ENCODE measurements at regions of chr12 and their contacts with region 1.

Region 1: DNA sequence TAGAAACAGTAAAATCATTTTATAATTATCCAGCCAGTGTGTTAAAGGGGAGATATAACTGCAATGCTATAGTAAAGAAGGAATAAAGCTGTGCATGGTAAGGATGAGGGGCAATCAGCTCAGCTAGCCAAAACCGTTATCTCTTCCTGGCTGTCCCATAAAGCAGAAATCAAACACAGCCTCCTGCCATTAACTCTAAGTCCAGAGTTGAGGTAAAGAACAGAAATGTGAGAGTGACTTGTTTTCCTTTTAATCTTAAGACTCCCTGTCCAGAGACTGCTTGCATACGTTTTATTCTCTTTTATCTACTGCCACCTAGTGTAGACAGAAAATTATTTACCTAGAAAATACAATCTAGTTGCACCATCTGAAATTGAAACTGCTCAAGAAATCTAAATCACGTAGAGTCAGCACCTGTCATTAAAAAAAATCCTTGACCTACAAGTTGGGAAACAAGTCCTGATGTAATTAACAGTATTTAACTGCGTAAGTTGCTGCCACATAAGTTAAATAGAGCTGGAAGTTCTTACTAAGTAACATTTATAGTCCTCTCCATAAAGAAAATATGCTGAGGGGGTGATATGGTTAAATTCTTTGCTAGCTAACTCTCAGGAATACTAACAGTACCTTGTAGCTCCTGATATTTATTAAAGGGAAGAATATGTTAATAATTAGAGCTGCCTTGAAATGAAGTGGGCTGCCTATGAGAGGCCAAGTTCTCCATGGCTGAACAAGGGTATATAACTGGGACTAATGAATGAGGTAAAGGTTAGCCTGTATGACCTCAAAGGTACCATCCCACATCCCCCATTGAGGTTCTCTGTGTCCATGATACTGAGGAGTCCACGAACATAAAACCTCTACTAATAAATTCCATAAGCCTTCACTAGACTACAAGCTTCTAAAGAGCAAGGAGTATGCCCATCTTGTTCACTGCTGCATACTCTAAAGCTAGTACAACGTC is 62.7 kb downstream of the GALNT4 start:
- DNase-seq: peak in 1 of 2 experiments; percentile 66
- H3K4me3 ChIP-seq: peak overlapping the region; percentile 28; the same call in 1 of the 2 replicates
- H3K27ac ChIP-seq: peak overlapping the region; percentile 17; the same call in 1 of the 2 replicates
- H3K4me1 ChIP-seq: peaks cover 4% of the 10 kb centered on the region
- H3K27me3 ChIP-seq: no peaks in the 10 kb centered on the region
- CTCF ChIP-seq: peak; percentile 77

Region 2: GRCh38 chr12:89051065-89051677 is 410.8 kb before region 1 on chr12:
- CTCF ChIA-PET with region 1: no interaction called
- POLR2A ChIA-PET with region 1: no interaction called
- intact Hi-C with region 1: loop called (anchors 1 kb)
- DNase-seq: peak; percentile 18 to 53
- H3K4me3 ChIP-seq: no peak overlapping the region
- H3K27ac ChIP-seq: no peak overlapping the region
- H3K4me1 ChIP-seq: no peaks in the 10 kb centered on the region
- H3K27me3 ChIP-seq: no peaks in the 10 kb centered on the region
- CTCF ChIP-seq: peak; percentile 97

Region 3: GRCh38 chr12:89421092-89421835 is 40.7 kb before region 1 on chr12:
- CTCF ChIA-PET with region 1: no interaction called
- POLR2A ChIA-PET with region 1: no interaction called
- intact Hi-C with region 1: no loop called
- DNase-seq: no peak
- H3K4me3 ChIP-seq: no peak overlapping the region
- H3K27ac ChIP-seq: no peak overlapping the region
- H3K4me1 ChIP-seq: peaks cover 18% of the 10 kb centered on the region
- H3K27me3 ChIP-seq: no peaks in the 10 kb centered on the region
- CTCF ChIP-seq: no peak; the same call in 1 of the 2 replicates

Region 4: GRCh38 chr12:89439941-89440340 is 22.0 kb before region 1 on chr12:
- CTCF ChIA-PET with region 1: no interaction called
- POLR2A ChIA-PET with region 1: no interaction called
- intact Hi-C with region 1: no loop called
- DNase-seq: no peak
- H3K4me3 ChIP-seq: no peak overlapping the region
- H3K27ac ChIP-seq: no peak overlapping the region
- H3K4me1 ChIP-seq: no peaks in the 10 kb centered on the region
- H3K27me3 ChIP-seq: no peaks in the 10 kb centered on the region
- CTCF ChIP-seq: no peak

Region 5: DNA sequence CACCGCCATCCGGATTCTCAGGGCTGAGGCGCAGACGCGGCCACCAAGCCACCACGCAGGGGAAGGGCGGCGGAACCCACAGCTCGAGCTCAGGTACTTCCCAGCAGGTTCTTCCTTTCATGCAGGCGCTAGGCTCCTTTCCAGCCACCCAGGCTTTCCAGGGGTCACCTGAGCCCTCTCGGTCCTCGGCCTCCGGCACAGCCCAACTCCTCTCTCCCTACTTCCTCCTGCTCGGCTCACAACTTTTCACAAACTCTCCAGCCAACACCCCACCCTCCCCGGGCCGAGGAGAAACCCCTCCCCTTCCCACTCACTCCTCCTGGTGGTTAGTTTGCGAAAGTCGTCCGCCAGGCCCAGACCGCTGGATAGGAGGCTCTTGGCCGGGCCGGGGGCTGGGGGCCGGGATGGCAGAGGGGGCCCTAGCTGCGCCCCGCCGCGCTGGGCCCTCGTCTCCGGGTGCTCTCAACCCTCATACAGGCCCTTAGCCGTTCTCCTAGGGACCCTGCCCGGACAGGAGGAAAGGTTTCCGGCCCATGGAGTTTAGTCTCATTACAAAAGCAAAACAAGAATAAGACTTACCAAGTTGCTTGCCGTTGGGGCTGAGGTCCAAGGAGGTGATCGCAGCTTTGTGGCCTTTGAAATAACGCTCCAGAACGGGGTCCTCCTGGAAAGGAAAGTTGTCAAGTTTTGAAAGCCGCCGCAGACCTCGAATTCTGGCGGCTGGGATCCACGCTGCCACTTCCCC is 62.8 kb after region 1 on chr12 and contains the start of gene GALNT4:
- CTCF ChIA-PET with region 1: no interaction called
- POLR2A ChIA-PET with region 1: no interaction called
- intact Hi-C with region 1: loop called (anchors 5 kb)
- DNase-seq: peak; percentile 70 to 82
- H3K4me3 ChIP-seq: peak within 1 kb of the TSS; percentile 98
- H3K27ac ChIP-seq: peak within 1 kb of the TSS; percentile 14; the same call in 1 of the 2 replicates
- H3K4me1 ChIP-seq: peaks cover 22% of the 10 kb centered on the region
- H3K27me3 ChIP-seq: no peaks in the 10 kb centered on the region
- CTCF ChIP-seq: peak; percentile 75
- total RNA-seq, gene GALNT4: 3.2 and 3.7 TPM in 2 replicates

Measured in PC-9 (cell line).